Lower leg skin (tissue), 4 donors: ENCODE measurements at regions of chr19 and their contacts with region 1.

Region 1: DNA sequence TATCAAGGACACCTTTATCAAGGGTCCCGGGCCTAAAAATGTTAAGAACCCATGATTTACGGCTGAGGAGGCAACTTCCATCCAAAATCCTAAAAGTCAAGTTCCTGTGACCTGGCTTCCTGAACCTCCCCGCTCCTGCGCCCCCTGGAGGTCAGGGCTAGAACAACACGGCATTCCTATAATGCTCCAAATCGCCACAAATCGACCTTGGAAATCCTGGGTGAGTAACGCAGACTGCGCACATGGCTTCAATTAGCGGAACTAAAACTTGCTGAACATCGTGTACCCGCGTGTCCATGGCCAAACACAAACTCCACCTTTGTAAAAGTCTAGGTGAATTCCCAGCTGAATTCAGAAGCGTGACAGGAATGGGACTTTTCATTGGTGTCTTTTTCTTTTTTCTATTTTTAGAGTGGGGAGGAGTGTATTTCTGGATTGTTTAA is 4.3 kb upstream of the C5AR1 start:
- DNase-seq: peak; percentile 76 to 97
- H3K4me3 ChIP-seq: no peak overlapping the region
- CTCF ChIP-seq: peak in 1 of 3 donors; percentile 77
- POLR2A ChIP-seq: no peak

Region 2: GRCh38 chr19:47210689-47211316 is 94.5 kb before region 1 on chr19:
- intact Hi-C with region 1: no loop called
- DNase-seq: peak; percentile 91 to 97
- H3K4me3 ChIP-seq: no peak overlapping the region
- CTCF ChIP-seq: peak in 2 of 3 donors; percentile 46 to 76
- POLR2A ChIP-seq: no peak

Region 3: GRCh38 chr19:47406711-47407416 is 101.5 kb after region 1 on chr19:
- intact Hi-C with region 1: loop called (anchors 10 kb)
- DNase-seq: no peak
- H3K4me3 ChIP-seq: no peak overlapping the region
- CTCF ChIP-seq: no peak
- POLR2A ChIP-seq: no peak